ENCODE measurements at regions of chr2 and their contacts with region 1.

Region 1: DNA sequence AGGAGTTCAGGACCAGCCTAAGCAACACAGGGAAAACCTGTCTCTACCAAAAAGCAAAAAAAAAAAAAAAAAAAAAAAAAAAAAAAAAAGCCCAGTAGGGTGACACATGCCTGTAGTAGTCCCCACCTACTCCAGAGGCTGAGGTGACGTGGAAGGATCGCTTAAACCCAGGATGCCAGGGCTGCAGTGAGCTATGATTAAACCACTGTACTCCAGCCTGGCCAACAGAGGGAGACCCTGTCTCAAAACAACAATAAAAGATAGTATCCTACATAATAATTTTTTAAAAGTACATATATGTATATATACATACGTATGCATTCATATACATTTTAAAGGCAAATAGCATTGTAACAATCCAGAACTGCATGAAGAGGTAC is 51.7 kb downstream of the SOS1 start:
- DNase-seq: no peak
- ATAC-seq: peak in 1 of 4 donors; percentile 49
- H3K4me3 ChIP-seq: no peak overlapping the region
- H3K27ac ChIP-seq: no peak overlapping the region
- H3K4me1 ChIP-seq: peaks cover 18% of the 10 kb centered on the region
- H3K27me3 ChIP-seq: no peaks in the 10 kb centered on the region
- CTCF ChIP-seq: no peak

Region 2: GRCh38 chr2:38948995-38949394 is 120.1 kb before region 1 on chr2:
- intact Hi-C with region 1: no loop called
- DNase-seq: no peak
- ATAC-seq: no peak
- H3K4me3 ChIP-seq: no peak overlapping the region
- H3K27ac ChIP-seq: no peak overlapping the region
- H3K4me1 ChIP-seq: no peaks in the 10 kb centered on the region
- H3K27me3 ChIP-seq: no peaks in the 10 kb centered on the region
- CTCF ChIP-seq: no peak

Region 3: GRCh38 chr2:39107156-39107555 is 38.0 kb after region 1 on chr2:
- intact Hi-C with region 1: loop called in 1 of 2 experiments (anchors 5 kb)
- DNase-seq: no peak
- ATAC-seq: peak; percentile 90 to 93 (median 91)
- H3K4me3 ChIP-seq: no peak overlapping the region
- H3K27ac ChIP-seq: peak overlapping the region; percentile 62
- H3K4me1 ChIP-seq: peaks cover 14% of the 10 kb centered on the region
- H3K27me3 ChIP-seq: no peaks in the 10 kb centered on the region
- CTCF ChIP-seq: no peak